ENCODE measurements at regions of chr9 and their contacts with region 1.

Region 1: DNA sequence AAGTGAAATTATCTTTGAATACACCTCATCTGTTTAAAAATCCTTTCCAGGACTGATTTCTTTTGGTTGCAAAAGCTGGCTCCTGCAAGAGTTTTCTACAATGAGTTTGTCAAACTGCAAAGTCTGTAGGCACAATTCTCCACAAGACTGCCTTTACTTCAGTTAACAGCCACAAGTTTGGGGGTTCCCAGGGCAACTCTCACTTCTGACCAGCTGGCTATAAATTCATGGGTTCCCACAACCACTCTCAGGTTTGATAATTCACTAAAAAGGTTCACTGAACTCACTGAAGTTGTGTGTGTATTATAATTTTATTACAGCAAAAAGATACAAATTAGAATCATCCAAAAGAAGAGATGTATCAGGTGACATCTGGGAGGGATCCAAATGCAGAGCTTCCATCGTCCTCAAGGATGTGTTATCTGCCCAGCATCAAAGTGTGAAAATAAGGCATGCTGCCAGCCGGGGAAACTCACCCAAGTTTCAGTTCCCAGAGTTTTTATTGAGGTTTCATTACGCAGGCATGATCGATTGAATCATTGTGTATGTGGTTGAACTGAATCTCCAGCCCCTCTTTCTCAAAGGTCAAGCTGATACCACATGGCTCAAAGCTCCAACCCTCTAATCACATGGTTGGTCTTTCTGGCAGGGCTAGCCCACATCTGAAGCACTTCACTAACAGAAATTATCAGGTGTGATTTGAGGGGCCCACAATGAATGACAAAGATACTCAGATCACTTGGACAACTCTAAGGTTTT is 19.0 kb upstream of the PSIP1 start:
- DNase-seq: peak; percentile 94
- ATAC-seq: peak; percentile 89
- H3K4me3 ChIP-seq: no peak overlapping the region
- H3K27ac ChIP-seq: peak overlapping the region; percentile 85
- H3K4me1 ChIP-seq: peaks cover 25% of the 10 kb centered on the region
- H3K27me3 ChIP-seq: no peaks in the 10 kb centered on the region
- CTCF ChIP-seq: no peak
- EP300 ChIP-seq: peak; percentile 63 to 64; a peak in 3 of 4 replicates
- POLR2A ChIP-seq: no peak
- RAD21 ChIP-seq: no peak; the same call in 1 of the 2 replicates

Region 2: GRCh38 chr9:15211160-15211814 is 318.5 kb before region 1 on chr9:
- CTCF ChIA-PET with region 1: interaction called, 10 read pairs
- POLR2A ChIA-PET with region 1: no interaction called
- RAD21 ChIA-PET with region 1: interaction called, 10 read pairs
- SMC1A ChIA-PET with region 1: interaction called, 9 read pairs
- in situ Hi-C with region 1: no loop called
- intact Hi-C with region 1: loop called (anchors 5 kb)
- DNase-seq: peak; percentile 30
- ATAC-seq: peak; percentile 86
- H3K4me3 ChIP-seq: no peak overlapping the region
- H3K27ac ChIP-seq: no peak overlapping the region
- H3K4me1 ChIP-seq: no peaks in the 10 kb centered on the region
- H3K27me3 ChIP-seq: no peaks in the 10 kb centered on the region
- CTCF ChIP-seq: peak; percentile 81 to 87 (median 85); a peak in 5 of 6 replicates
- EP300 ChIP-seq: no peak
- POLR2A ChIP-seq: no peak
- RAD21 ChIP-seq: peak; percentile 86

Region 3: GRCh38 chr9:15422372-15423230 is 107.1 kb before region 1 on chr9 and contains the start of gene SNAPC3:
- CTCF ChIA-PET with region 1: interaction called, 23 read pairs
- POLR2A ChIA-PET with region 1: interaction called, 4 read pairs
- RAD21 ChIA-PET with region 1: interaction called, 5 read pairs
- SMC1A ChIA-PET with region 1: interaction called, 12 read pairs
- in situ Hi-C with region 1: no loop called
- intact Hi-C with region 1: loop called (anchors 2 kb)
- DNase-seq: peak; percentile 81
- ATAC-seq: peak; percentile 95
- H3K4me3 ChIP-seq: peak within 1 kb of the TSS; percentile 86
- H3K27ac ChIP-seq: peak within 1 kb of the TSS; percentile 72
- H3K4me1 ChIP-seq: peaks cover 8% of the 10 kb centered on the region; the same call in 1 of the 2 replicates
- H3K27me3 ChIP-seq: no peaks in the 10 kb centered on the region
- CTCF ChIP-seq: no peak
- EP300 ChIP-seq: peak; percentile 40 to 59; a peak in 2 of 4 replicates
- POLR2A ChIP-seq: peak; percentile 90
- RAD21 ChIP-seq: no peak
- polyA plus RNA-seq, gene SNAPC3: 5.7 to 7.4 TPM

Region 4: DNA sequence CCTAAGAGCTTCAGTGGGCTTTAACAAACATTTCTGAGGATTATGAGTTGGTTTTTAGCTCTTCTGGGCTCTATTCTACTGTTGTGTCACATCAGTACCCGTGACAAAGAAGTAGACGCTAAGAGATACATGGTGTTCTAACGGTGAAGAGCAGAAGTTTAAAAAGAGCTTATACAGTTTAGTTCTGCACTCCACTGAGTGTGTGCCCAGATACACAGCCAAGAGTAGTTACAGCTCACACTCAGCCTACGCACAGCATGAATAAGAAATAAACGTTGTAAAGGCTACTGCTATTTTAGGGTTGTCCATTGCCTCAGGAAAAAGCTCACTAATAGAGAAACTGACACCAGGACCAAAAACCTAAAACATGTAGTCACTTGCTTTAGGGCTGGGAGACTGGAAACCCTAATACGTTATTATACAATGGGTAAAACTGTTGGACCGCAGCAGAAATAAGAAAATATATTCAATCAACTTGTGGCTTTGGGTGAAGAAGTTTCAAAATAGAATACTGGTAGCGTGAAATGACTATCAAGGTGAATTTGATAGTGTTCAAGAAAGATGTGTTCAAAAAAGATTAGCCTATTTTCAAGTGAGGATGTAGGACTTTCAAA is 53.7 kb before region 1 on chr9:
- CTCF ChIA-PET with region 1: interaction called, 34 read pairs
- POLR2A ChIA-PET with region 1: interaction called, 6 read pairs
- RAD21 ChIA-PET with region 1: interaction called, 10 read pairs
- SMC1A ChIA-PET with region 1: interaction called, 29 read pairs
- in situ Hi-C with region 1: no loop called
- intact Hi-C with region 1: no loop called
- DNase-seq: peak; percentile 20
- ATAC-seq: peak; percentile 70
- H3K4me3 ChIP-seq: no peak overlapping the region
- H3K27ac ChIP-seq: no peak overlapping the region
- H3K4me1 ChIP-seq: peaks cover 3% of the 10 kb centered on the region; the same call in 1 of the 2 replicates
- H3K27me3 ChIP-seq: no peaks in the 10 kb centered on the region
- CTCF ChIP-seq: no peak
- EP300 ChIP-seq: peak in 1 of 2 experiments; percentile 27; a peak in 1 of 4 replicates
- POLR2A ChIP-seq: no peak
- RAD21 ChIP-seq: no peak

Region 5: GRCh38 chr9:15501179-15501578 is 28.6 kb before region 1 on chr9:
- CTCF ChIA-PET with region 1: interaction called, 32 read pairs
- POLR2A ChIA-PET with region 1: interaction called, 4 read pairs
- RAD21 ChIA-PET with region 1: interaction called, 32 read pairs
- SMC1A ChIA-PET with region 1: interaction called, 100 read pairs
- in situ Hi-C with region 1: no loop called
- intact Hi-C with region 1: loop called (anchors 1 kb)
- DNase-seq: no peak
- ATAC-seq: no peak
- H3K4me3 ChIP-seq: no peak overlapping the region
- H3K27ac ChIP-seq: no peak overlapping the region
- H3K4me1 ChIP-seq: no peaks in the 10 kb centered on the region
- H3K27me3 ChIP-seq: no peaks in the 10 kb centered on the region
- CTCF ChIP-seq: no peak
- EP300 ChIP-seq: no peak
- POLR2A ChIP-seq: no peak
- RAD21 ChIP-seq: no peak

Region 6: DNA sequence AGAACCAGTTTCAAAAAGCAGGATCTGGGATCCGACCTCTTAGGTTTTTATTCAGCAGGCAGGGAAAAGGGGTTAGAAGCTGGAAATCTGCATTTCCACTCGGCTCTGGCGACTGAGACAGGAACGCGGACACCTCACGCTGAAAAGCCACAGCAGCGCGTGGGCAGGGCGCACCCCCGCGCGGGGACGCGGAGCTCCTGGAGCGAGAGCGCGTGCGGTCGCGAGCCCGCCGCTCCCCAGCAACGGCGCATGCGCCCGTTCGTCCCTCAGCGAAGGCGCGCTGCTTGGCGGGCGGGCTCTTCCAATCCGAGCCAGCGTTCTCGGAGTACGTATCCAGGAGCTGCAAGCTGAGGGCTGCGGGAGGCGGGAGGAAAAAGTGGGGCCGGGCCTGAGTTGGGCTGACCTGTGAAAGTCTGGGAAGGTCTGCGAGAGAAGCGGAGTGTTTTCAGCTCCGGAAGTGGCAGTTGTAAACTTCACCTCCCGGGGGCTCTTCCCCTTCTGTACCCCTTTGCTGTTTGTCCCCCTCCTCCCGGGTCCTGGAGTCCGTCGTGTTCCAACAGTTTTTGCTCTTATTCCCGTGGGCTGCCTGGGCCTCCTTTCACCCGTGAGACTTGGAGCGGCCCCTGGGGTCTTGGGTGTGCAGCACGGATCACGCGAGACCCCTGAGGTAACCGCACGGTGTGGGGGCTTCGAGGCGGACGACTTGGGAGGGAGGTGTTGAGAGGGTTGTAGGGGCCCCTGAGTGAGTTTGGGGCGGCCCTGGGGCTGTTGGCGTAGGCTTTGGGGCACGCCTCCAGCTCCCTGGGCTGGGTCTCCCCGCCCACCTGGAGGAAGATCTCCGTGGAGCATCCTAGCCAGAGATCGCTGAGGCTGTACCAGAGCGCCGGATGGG is 23.1 kb after region 1 on chr9 and contains the start of gene CCDC171:
- CTCF ChIA-PET with region 1: interaction called, 7 read pairs
- POLR2A ChIA-PET with region 1: interaction called, 9 read pairs
- RAD21 ChIA-PET with region 1: interaction called, 18 read pairs
- SMC1A ChIA-PET with region 1: interaction called, 8 read pairs
- in situ Hi-C with region 1: no loop called
- intact Hi-C with region 1: no loop called
- DNase-seq: peak; percentile 75
- ATAC-seq: peak; percentile 88
- H3K4me3 ChIP-seq: peak within 1 kb of the TSS; percentile 95
- H3K27ac ChIP-seq: peak within 1 kb of the TSS; percentile 80
- H3K4me1 ChIP-seq: peaks cover 8% of the 10 kb centered on the region
- H3K27me3 ChIP-seq: no peaks in the 10 kb centered on the region
- CTCF ChIP-seq: no peak
- EP300 ChIP-seq: no peak; a peak in 1 of 4 replicates
- POLR2A ChIP-seq: peak; percentile 74
- RAD21 ChIP-seq: no peak
- polyA plus RNA-seq, gene CCDC171: 1.00 to 1.1 TPM

Region 7: GRCh38 chr9:15697446-15697851 is 167.7 kb after region 1 on chr9:
- CTCF ChIA-PET with region 1: no interaction called
- POLR2A ChIA-PET with region 1: no interaction called
- RAD21 ChIA-PET with region 1: no interaction called
- SMC1A ChIA-PET with region 1: no interaction called
- in situ Hi-C with region 1: no loop called
- intact Hi-C with region 1: no loop called
- DNase-seq: no peak
- ATAC-seq: no peak
- H3K4me3 ChIP-seq: no peak overlapping the region
- H3K27ac ChIP-seq: no peak overlapping the region
- H3K4me1 ChIP-seq: no peaks in the 10 kb centered on the region
- H3K27me3 ChIP-seq: no peaks in the 10 kb centered on the region
- CTCF ChIP-seq: no peak
- EP300 ChIP-seq: no peak
- POLR2A ChIP-seq: no peak
- RAD21 ChIP-seq: no peak

Region 8: DNA sequence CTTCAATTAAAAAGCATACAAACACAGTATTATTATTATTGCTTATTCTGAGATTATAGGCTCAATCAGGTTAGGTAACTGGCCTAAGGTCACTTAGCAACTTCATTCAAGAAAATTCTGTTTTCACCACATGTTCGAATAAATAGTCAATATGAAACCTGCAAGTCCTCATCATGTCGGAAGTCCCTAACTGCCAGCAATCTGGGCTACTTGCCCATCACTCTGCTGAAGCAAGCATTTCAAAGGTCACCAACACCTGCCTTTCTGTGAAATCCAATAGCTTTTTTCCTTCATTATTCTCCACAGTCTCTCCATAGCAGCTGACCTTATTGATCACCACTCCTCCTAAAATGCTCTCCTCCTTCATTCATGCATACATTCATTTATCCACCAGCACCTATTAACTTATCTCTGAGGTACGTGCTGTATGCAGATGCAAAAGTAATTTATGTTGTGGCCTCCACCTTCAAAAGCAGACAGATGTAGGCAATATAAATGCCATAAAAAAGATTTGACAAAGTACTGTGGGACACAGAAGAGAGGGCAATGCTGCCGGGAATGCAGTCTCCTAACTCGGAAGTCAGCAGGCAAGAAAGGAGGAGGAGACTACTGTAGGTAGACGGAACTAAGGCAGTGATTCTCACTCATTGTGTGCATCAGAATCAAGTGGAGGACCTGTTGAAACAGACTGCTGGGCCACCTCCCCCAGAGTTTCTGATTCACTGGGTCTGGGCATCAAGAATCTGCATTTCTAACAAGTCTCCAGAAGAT is 1029.9 kb after region 1 on chr9:
- CTCF ChIA-PET with region 1: no interaction called
- POLR2A ChIA-PET with region 1: no interaction called
- RAD21 ChIA-PET with region 1: no interaction called
- SMC1A ChIA-PET with region 1: no interaction called
- in situ Hi-C with region 1: no loop called
- intact Hi-C with region 1: no loop called
- DNase-seq: no peak
- ATAC-seq: peak; percentile 85
- H3K4me3 ChIP-seq: no peak overlapping the region
- H3K27ac ChIP-seq: no peak overlapping the region
- H3K4me1 ChIP-seq: no peaks in the 10 kb centered on the region
- H3K27me3 ChIP-seq: no peaks in the 10 kb centered on the region
- CTCF ChIP-seq: no peak
- EP300 ChIP-seq: 0 out of 4 replicates have a peak, but pooled peaks of 1 of the 2 experiments have one; percentile 37
- POLR2A ChIP-seq: no peak
- RAD21 ChIP-seq: no peak